ENCODE measurements at regions of chr12 and their contacts with region 1.

Region 1: DNA sequence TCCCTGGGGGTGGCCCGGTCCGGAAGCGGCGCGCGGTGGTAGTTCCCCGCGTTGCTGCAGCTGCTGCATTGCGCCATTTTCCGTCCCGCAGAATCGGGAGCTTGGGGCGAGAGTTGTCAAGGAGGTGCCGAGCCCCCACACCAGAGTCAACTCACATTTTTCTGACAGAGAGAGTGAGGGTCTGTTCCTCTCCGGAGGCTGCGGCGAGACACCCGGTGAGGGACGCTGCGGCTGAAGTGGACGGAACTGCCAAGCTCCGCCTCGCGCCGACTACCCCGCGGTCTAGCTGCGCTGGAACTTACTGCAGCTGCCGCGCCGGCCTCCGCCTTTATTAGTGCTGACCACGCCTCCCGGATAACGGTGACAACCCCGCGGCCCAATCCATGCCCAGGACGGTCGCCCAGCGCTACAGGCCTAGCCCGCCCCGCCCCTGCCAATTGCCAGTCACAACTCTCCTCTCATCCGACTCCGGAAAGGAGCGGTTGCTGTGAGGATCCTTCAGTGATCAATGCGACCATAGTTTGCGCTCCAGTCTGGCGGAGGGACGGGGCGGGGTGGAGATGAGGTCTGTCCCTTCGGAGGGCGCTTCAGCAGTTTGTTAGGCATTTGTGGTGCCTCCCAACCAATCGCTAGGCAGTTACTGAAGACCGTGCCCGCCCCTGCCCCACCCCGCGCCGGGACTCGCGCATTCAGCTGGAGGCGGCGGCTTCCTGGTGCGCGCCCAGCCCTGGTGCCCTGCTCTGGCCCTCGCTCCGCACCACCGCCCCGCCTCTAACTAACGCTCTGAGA is at the start of gene VAMP1:
- DNase-seq: peak; percentile 97
- H3K4me3 ChIP-seq: peak within 1 kb of the TSS; percentile 67 to 84 (median 71)
- H3K27ac ChIP-seq: peak within 1 kb of the TSS; percentile 49
- H3K4me1 ChIP-seq: peaks cover 16% of the 10 kb centered on the region
- H3K27me3 ChIP-seq: peaks cover 0 to 5% of the 10 kb centered on the region in 2 experiments
- CTCF ChIP-seq: no peak
- POLR2A ChIP-seq: peak; percentile 99
- total RNA-seq, gene VAMP1: 6.6 and 7.0 TPM in 2 replicates

Region 2: DNA sequence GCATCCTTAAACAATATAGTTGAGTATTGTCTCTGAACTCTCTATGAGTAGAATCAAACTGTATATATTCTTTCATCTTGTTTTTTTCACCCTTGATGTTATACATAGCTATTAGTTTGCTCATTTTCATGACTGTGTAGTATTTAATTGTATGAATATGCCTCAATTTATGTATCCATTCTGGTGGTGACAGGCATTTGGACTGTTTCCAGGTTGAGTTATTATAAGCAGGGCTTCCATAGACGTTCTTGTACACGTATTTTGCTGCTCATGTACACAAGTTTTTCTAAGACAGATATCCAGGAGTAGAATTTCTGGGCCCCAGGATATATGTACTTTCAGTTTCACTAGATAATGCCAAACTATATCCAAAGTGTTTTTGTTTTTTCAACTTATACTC is 827.3 kb before region 1 on chr12:
- CTCF ChIA-PET with region 1: no interaction called
- POLR2A ChIA-PET with region 1: no interaction called
- dilution Hi-C with region 1: no loop called
- intact Hi-C with region 1: no loop called
- DNase-seq: no peak
- H3K4me3 ChIP-seq: no peak overlapping the region
- H3K27ac ChIP-seq: no peak overlapping the region
- H3K4me1 ChIP-seq: no peaks in the 10 kb centered on the region
- H3K27me3 ChIP-seq: no peaks in the 10 kb centered on the region
- CTCF ChIP-seq: no peak
- POLR2A ChIP-seq: no peak

Region 3: DNA sequence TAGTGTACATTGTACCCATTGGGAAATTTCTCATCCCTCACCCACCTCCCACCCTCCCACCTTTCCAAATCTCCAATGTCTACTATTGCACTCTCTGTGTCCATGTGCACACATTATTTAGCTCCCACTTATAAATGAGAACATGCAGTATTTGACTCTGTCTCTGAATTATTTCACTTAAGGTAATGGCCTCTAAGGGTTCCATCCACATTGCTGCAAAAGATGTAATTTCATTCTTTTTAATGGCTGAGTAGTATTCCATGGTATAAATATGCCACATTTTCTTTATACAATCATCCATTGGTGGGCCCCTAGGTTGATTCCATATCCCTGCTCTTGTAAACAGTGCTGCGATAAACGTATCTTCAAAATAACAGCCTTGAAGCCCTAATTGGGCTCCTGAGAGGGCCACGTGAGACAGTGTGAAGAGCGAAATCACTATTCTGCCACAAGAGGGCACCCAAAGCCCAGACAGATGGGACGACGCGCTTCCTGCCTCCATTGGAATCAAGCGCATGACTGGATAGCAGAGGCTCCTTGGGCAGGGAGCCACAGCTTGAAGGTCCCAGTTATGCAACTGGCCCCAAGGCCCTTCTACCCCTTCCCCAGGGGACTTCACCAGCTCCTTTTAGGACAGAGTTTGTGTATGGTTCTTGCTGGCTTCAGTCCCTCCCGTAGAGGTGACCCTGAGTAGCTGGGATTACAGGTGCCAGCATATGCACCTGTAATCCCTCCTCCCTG is 47.1 kb before region 1 on chr12:
- CTCF ChIA-PET with region 1: interaction called, 147 read pairs
- POLR2A ChIA-PET with region 1: interaction called, 7 read pairs
- dilution Hi-C with region 1: no loop called
- intact Hi-C with region 1: loop called (anchors 1 kb)
- DNase-seq: peak; percentile 92
- H3K4me3 ChIP-seq: no peak overlapping the region
- H3K27ac ChIP-seq: no peak overlapping the region
- H3K4me1 ChIP-seq: no peaks in the 10 kb centered on the region
- H3K27me3 ChIP-seq: no peaks in the 10 kb centered on the region
- CTCF ChIP-seq: peak; percentile 72 to 84
- POLR2A ChIP-seq: no peak

Region 4: DNA sequence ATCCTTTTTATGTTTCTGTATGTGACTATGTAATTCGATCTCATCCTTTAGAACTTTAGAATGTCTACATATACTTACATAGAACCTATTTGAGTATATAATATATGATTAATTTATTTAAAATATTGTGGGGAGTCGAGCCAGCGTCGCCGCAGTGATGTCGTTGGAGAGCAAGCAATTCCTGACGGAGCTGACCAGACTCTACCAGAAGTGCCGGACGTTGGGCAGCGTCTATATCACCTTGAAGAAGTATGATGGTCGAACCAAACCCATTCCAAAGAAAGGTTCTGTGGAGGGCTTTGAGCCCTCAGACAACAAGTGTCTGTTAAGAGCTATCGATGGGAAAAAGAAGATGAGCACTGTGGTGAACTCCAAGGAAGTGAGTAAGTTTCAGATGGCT is 32.2 kb before region 1 on chr12:
- CTCF ChIA-PET with region 1: interaction called, 19 read pairs
- POLR2A ChIA-PET with region 1: interaction called, 3 read pairs
- dilution Hi-C with region 1: no loop called
- intact Hi-C with region 1: no loop called
- DNase-seq: no peak
- H3K4me3 ChIP-seq: no peak overlapping the region
- H3K27ac ChIP-seq: no peak overlapping the region
- H3K4me1 ChIP-seq: no peaks in the 10 kb centered on the region
- H3K27me3 ChIP-seq: no peaks in the 10 kb centered on the region
- CTCF ChIP-seq: no peak
- POLR2A ChIP-seq: no peak

Region 5: GRCh38 chr12:6451348-6452244 is 19.0 kb before region 1 on chr12 and contains the start of gene TAPBPL:
- CTCF ChIA-PET with region 1: interaction called, 25 read pairs
- POLR2A ChIA-PET with region 1: interaction called, 8 read pairs
- dilution Hi-C with region 1: no loop called
- intact Hi-C with region 1: no loop called
- DNase-seq: peak; percentile 89
- H3K4me3 ChIP-seq: peak within 1 kb of the TSS; percentile 6 to 51 (median 31)
- H3K27ac ChIP-seq: peak within 1 kb of the TSS; percentile 62
- H3K4me1 ChIP-seq: peaks cover 27% of the 10 kb centered on the region
- H3K27me3 ChIP-seq: no peaks in the 10 kb centered on the region
- CTCF ChIP-seq: no peak
- POLR2A ChIP-seq: peak; percentile 41
- total RNA-seq, gene TAPBPL: 9.9 and 11.7 TPM in 2 replicates

Region 6: GRCh38 chr12:6533923-6534694 is 63.5 kb after region 1 on chr12 and contains the start of gene GAPDH:
- CTCF ChIA-PET with region 1: interaction called, 61 read pairs
- POLR2A ChIA-PET with region 1: interaction called, 25 read pairs
- dilution Hi-C with region 1: no loop called
- intact Hi-C with region 1: loop called (anchors 1 kb)
- DNase-seq: peak; percentile 95
- H3K4me3 ChIP-seq: peak within 1 kb of the TSS; percentile 68 to 70 (median 68)
- H3K27ac ChIP-seq: peak within 1 kb of the TSS; percentile 73
- H3K4me1 ChIP-seq: peaks cover 34% of the 10 kb centered on the region
- H3K27me3 ChIP-seq: no peaks in the 10 kb centered on the region
- CTCF ChIP-seq: no peak
- POLR2A ChIP-seq: peak; percentile 99
- total RNA-seq, gene GAPDH: 4,245 and 4,648 TPM in 2 replicates

Measured in endothelial cell of umbilical vein (primary cell).